Psoas muscle (tissue), 8 donors: ENCODE measurements at regions of chr11 and their contacts with region 1.

Region 1: GRCh38 chr11:93209466-93209865 is 11.7 kb upstream of the SLC36A4 start:
- DNase-seq: no peak
- ATAC-seq: no peak
- H3K4me3 ChIP-seq: no peak overlapping the region
- H3K27ac ChIP-seq: no peak overlapping the region
- H3K4me1 ChIP-seq: no peaks in the 10 kb centered on the region
- H3K27me3 ChIP-seq: peaks cover 0 to 3% (median 0%) of the 10 kb centered on the region in 3 donors
- CTCF ChIP-seq: no peak

Region 2: GRCh38 chr11:93159721-93160120 is 49.7 kb before region 1 on chr11:
- intact Hi-C with region 1: loop called in 1 of 2 experiments (anchors 2 kb)
- DNase-seq: no peak
- ATAC-seq: no peak
- H3K4me3 ChIP-seq: no peak overlapping the region
- H3K27ac ChIP-seq: no peak overlapping the region
- H3K4me1 ChIP-seq: no peaks in the 10 kb centered on the region
- H3K27me3 ChIP-seq: no peaks in the 10 kb centered on the region
- CTCF ChIP-seq: no peak

Region 3: GRCh38 chr11:93432247-93432646 is 222.8 kb after region 1 on chr11:
- intact Hi-C with region 1: no loop called
- DNase-seq: no peak
- ATAC-seq: no peak
- H3K4me3 ChIP-seq: no peak overlapping the region
- H3K27ac ChIP-seq: no peak overlapping the region
- H3K4me1 ChIP-seq: no peaks in the 10 kb centered on the region
- H3K27me3 ChIP-seq: no peaks in the 10 kb centered on the region
- CTCF ChIP-seq: no peak